GM12878 (cell line): ENCODE measurements at regions of chr6 and their contacts with region 1.

Region 1: DNA sequence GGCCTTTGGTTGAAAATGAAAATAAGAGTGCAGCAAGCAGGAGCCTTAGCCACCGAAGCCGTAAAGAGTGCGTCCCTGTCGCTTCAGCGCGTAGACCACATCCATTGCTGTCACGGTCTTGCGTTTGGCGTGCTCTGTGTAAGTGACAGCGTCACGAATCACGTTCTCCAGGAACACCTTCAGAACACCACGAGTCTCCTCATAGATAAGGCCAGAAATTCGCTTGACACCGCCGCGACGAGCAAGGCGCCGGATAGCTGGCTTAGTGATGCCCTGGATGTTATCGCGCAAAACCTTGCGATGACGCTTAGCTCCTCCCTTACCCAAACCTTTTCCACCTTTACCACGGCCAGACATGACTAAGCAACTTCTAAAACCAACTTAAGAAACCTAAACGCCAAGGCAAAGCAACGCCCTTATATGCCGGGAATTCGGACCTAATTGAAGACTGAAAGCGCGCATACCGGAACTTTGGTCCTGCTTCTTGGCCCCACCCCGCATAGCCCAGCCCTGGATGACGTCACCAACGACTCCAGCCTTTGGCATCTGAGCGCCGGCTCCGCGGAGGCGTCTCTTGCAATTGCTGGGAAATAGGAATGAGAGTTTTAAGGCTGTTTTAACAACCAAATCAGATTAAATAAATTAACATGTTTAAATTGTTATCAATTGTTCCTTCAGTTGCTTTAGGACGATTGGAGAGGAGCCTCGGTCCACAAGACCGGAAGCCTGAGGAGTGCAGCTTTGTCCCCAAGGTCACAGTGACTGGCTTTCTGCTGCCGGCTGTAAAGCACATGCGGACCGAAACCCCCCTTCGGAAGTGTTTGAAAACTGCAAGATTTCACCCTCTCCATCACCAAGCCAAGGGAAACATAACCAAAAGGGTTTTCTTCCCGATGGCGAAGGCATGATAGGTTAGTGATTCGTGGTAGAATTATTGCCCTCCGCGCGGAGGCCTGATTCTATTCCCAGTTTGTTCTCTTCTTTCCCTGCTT is 79.6 kb upstream of the BTN3A2 start:
- DNase-seq: peak; percentile 100
- ATAC-seq: peak; percentile 84
- H3K4me3 ChIP-seq: peak overlapping the region; percentile 75
- H3K27ac ChIP-seq: peak overlapping the region; percentile 97
- H3K4me1 ChIP-seq: no peaks in the 10 kb centered on the region; the same call in 1 of the 2 replicates
- H3K27me3 ChIP-seq: no peaks in the 10 kb centered on the region
- CTCF ChIP-seq: no peak
- EP300 ChIP-seq: peak in 1 of 2 experiments; percentile 72; a peak in 3 of 4 replicates
- POLR2A ChIP-seq: peak; percentile 95
- RAD21 ChIP-seq: no peak

Region 2: GRCh38 chr6:26006086-26006939 is 279.1 kb before region 1 on chr6:
- CTCF ChIA-PET with region 1: no interaction called
- POLR2A ChIA-PET with region 1: no interaction called
- RAD21 ChIA-PET with region 1: no interaction called
- SMC1A ChIA-PET with region 1: no interaction called
- in situ Hi-C with region 1: no loop called
- intact Hi-C with region 1: no loop called
- DNase-seq: no peak
- ATAC-seq: no peak
- H3K4me3 ChIP-seq: no peak overlapping the region
- H3K27ac ChIP-seq: no peak overlapping the region
- H3K4me1 ChIP-seq: no peaks in the 10 kb centered on the region
- H3K27me3 ChIP-seq: no peaks in the 10 kb centered on the region
- CTCF ChIP-seq: no peak
- EP300 ChIP-seq: no peak
- POLR2A ChIP-seq: no peak
- RAD21 ChIP-seq: no peak

Region 3: GRCh38 chr6:26304797-26305640 is 19.6 kb after region 1 on chr6:
- CTCF ChIA-PET with region 1: interaction called, 11 read pairs
- POLR2A ChIA-PET with region 1: interaction called, 6 read pairs
- RAD21 ChIA-PET with region 1: interaction called, 11 read pairs
- SMC1A ChIA-PET with region 1: interaction called, 17 read pairs
- in situ Hi-C with region 1: no loop called
- intact Hi-C with region 1: loop called (anchors 2 kb)
- DNase-seq: no peak
- ATAC-seq: peak; percentile 79
- H3K4me3 ChIP-seq: peak overlapping the region; percentile 60
- H3K27ac ChIP-seq: peak overlapping the region; percentile 41
- H3K4me1 ChIP-seq: peaks cover 11% of the 10 kb centered on the region
- H3K27me3 ChIP-seq: no peaks in the 10 kb centered on the region
- CTCF ChIP-seq: no peak
- EP300 ChIP-seq: peak in 1 of 2 experiments; percentile 54; a peak in 2 of 4 replicates
- POLR2A ChIP-seq: no peak
- RAD21 ChIP-seq: no peak